HCT116 (cell line): ENCODE measurements at regions of chr19 and their contacts with region 1.

Region 1: DNA sequence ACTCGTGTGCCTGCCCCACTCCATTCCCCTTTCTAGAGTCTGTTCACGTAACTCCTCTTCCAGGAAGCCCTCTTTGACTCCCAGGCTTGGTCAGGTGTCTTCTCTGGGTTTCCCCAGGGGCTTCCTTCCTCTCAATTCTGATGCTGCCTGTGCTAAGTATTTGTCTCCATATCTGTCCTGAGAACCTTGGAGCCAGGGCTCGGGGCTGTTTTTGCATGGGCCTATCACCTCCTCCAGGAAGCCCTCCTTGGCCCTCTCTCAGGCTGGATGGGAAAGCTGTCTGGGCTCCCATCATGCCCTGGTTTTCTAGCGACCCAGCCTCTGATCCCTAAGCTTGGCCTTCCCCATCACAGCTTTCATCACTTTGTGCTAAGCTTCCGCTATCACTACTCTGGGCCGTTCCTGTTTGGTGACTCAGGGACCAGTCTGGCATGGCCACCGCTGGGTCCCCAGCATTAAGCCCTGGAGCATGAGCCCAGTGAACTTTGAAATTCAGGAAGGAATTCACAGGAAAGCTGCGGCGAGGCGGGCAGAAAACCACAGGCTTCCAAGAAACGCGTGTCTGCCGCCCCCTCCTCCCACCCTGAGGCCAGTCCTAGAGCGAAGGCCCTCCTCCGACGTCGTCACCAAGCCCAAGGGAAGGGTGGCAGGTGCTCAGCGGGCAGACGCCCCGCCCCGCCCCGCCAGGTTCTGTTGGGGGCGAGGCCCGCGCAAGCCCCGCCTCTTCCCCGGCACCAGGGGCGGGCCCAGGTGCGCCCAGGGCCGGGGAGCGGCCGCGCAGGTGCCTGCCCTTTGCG is 486 bp upstream of the SPINT2 start:
- DNase-seq: peak; percentile 83
- ATAC-seq: peak; percentile 84
- H3K4me3 ChIP-seq: peak overlapping the region; percentile 81 to 100
- H3K27ac ChIP-seq: peak overlapping the region; percentile 99
- H3K4me1 ChIP-seq: peaks cover 45 to 58% of the 10 kb centered on the region in 2 experiments
- H3K27me3 ChIP-seq: no peaks in the 10 kb centered on the region
- CTCF ChIP-seq: no peak
- POLR2A ChIP-seq: no peak
- RAD21 ChIP-seq: no peak

Region 2: DNA sequence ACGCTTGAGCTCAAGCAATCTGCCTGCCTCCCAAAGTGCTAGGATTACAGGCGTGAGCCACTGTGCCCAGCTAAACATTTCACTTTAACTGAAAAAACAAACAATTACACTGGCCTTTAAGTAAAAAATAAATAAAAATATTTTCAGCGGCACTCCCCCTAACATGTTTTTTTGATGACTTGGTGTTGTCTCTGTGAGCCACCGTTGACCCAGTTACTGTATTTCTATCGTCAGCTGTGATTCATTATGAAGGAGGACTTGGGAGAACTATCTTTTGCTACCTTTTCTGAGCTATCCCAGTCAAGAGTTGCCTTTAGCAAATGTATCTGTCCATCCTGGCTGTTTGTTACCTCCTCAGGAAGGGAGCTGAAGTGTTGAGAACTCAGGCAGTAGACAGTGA is 21.7 kb after region 1 on chr19:
- CTCF ChIA-PET with region 1: no interaction called
- POLR2A ChIA-PET with region 1: interaction called, 12 read pairs
- RAD21 ChIA-PET with region 1: no interaction called
- intact Hi-C with region 1: no loop called
- DNase-seq: no peak
- ATAC-seq: no peak
- H3K4me3 ChIP-seq: no peak overlapping the region
- H3K27ac ChIP-seq: no peak overlapping the region
- H3K4me1 ChIP-seq: peaks cover 0 to 5% of the 10 kb centered on the region in 2 experiments; a peak in 1 of 4 replicates
- H3K27me3 ChIP-seq: no peaks in the 10 kb centered on the region
- CTCF ChIP-seq: no peak
- POLR2A ChIP-seq: no peak
- RAD21 ChIP-seq: no peak

Region 3: DNA sequence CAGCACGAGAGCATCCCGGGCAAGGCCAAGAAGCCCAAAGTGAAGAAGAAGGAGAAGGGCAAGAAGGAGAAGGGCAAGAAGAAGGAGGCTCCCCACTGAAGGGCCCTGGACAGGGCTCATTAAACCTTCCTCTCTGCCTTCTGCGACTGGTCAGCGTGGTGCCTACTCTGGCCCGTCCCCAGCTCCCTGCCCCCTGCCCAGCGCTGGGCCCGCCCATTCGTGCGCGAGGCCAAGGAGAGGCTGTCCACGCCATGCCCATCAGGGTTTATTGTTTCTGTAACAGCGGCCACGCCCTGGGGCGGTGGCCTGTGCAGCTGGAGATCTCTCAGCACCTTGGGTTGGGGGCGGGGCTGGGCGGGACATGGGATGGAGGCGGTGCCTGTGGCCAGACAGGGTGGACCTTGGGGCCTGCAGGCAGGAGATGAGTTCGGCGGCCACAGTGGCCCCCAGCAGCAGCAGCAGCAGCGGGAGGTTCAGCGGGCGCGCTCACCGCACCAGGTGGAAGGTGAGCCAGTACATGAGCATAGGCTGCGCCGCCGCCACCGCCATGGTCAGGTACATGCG is 41.1 kb after region 1 on chr19:
- CTCF ChIA-PET with region 1: interaction called, 3 read pairs
- POLR2A ChIA-PET with region 1: interaction called, 19 read pairs
- RAD21 ChIA-PET with region 1: no interaction called
- intact Hi-C with region 1: loop called (anchors 1 kb)
- DNase-seq: peak; percentile 96
- ATAC-seq: peak; percentile 71
- H3K4me3 ChIP-seq: peak overlapping the region; percentile 91 to 98
- H3K27ac ChIP-seq: peak overlapping the region; percentile 98
- H3K4me1 ChIP-seq: peaks cover 36 to 51% of the 10 kb centered on the region in 2 experiments
- H3K27me3 ChIP-seq: no peaks in the 10 kb centered on the region
- CTCF ChIP-seq: no peak
- POLR2A ChIP-seq: peak; percentile 84
- RAD21 ChIP-seq: no peak

Region 4: DNA sequence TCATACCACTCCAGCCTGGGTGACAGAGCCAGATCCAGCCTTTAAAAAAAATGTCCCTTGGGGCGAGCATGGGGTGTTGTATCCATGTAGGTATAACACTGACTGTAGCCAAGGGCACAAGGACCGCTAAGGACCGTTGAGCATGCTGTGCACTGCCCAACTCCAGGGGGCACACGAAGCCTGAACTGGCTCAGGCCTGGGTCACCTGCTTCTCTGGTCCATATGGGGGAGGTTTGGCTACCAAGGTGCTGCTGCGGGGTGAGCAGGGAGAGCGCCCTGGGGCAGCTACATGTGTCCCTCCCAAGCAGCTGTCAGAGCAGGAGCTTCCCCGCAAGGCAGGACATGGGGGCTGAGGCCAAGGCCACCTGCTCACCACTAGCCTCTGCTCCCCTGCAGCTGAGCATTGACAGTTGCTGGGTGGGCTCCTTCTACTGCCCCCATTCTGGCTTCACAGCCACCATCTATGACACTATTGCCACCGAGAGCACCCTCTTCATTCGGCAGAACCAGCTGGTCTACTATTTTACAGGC is 88.0 kb after region 1 on chr19:
- CTCF ChIA-PET with region 1: no interaction called
- POLR2A ChIA-PET with region 1: no interaction called
- RAD21 ChIA-PET with region 1: no interaction called
- intact Hi-C with region 1: no loop called
- DNase-seq: no peak
- ATAC-seq: peak; percentile 43; the same call in 1 of the 2 replicates
- H3K4me3 ChIP-seq: no peak overlapping the region
- H3K27ac ChIP-seq: no peak overlapping the region
- H3K4me1 ChIP-seq: peaks cover 0 to 5% of the 10 kb centered on the region in 2 experiments; a peak in 2 of 4 replicates
- H3K27me3 ChIP-seq: no peaks in the 10 kb centered on the region
- CTCF ChIP-seq: no peak
- POLR2A ChIP-seq: no peak
- RAD21 ChIP-seq: no peak